Activated CD8-positive, alpha-beta memory T cell treated with anti-CD3 and anti-CD28 coated beads, Interleukin-2, amount 10 ng/mL, durations not matched to agents 7 days and 5 days (primary cell): ENCODE measurements at regions of chr5 and their contacts with region 1.

Region 1: GRCh38 chr5:134411546-134412266 is at the start of gene CDKN2AIPNL:
- DNase-seq: peak; percentile 92
- ATAC-seq: peak; percentile 100
- H3K4me3 Mint-ChIP-seq: peak within 1 kb of the TSS; percentile 96
- H3K27ac Mint-ChIP-seq: peak within 1 kb of the TSS; percentile 87
- H3K4me1 Mint-ChIP-seq: peaks cover 30% of the 10 kb centered on the region
- H3K27me3 Mint-ChIP-seq: no peaks in the 10 kb centered on the region
- total RNA-seq, gene CDKN2AIPNL: 28.0 to 33.8 TPM

Region 2: DNA sequence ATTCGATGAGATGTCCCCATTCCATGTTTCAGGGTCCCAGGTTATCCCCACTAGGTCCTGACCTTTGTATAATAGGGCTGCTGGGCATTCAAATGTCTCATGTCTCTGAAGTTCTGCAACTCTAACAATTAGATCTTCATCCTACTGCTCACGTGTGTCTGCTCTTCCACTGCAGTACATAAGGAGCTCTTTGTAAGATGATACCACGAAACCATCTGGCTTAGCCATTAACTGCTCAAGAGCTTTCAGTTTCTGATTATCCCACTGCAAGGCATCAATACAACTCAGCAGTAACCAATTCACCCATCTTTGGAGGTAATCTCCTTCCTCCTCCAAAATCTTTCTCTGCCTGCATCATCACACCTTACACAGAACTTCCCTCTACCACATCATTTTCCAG is 135.9 kb before region 1 on chr5:
- CTCF ChIA-PET with region 1: no interaction called
- DNase-seq: no peak
- ATAC-seq: peak; percentile 45
- H3K4me3 Mint-ChIP-seq: no peak overlapping the region
- H3K27ac Mint-ChIP-seq: no peak overlapping the region
- H3K4me1 Mint-ChIP-seq: peaks cover 5% of the 10 kb centered on the region
- H3K27me3 Mint-ChIP-seq: peaks cover 5% of the 10 kb centered on the region

Region 3: DNA sequence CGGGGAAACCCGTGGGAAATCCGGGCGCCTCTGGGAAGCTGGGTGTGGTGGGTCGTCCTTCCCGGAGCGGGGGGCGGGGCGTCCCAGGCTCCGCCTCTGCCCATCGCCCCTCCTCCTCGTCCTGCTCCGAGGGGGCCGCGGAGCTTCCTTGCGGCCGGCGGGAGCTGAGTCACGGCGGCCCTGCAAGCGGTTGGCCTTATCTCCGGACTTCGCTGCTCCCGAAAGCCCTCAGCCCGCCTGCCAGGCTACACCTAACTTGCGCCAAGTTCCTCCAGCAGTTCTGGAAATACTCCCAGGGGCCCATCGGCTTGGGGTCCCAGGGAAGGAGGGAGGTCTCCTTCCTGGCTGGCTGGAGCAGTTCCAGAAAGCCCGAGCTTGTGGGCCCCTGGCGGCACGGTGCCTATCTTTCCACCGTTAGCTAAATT is 54.1 kb after region 1 on chr5:
- CTCF ChIA-PET with region 1: interaction called, 22 read pairs
- DNase-seq: peak; percentile 72
- ATAC-seq: peak; percentile 93
- H3K4me3 Mint-ChIP-seq: peak overlapping the region; percentile 72
- H3K27ac Mint-ChIP-seq: peak overlapping the region; percentile 83
- H3K4me1 Mint-ChIP-seq: peaks cover 14% of the 10 kb centered on the region
- H3K27me3 Mint-ChIP-seq: no peaks in the 10 kb centered on the region

Region 4: GRCh38 chr5:134555890-134556311 is 144.2 kb after region 1 on chr5:
- CTCF ChIA-PET with region 1: no interaction called
- DNase-seq: peak; percentile 87
- ATAC-seq: peak; percentile 90
- H3K4me3 Mint-ChIP-seq: peak overlapping the region; percentile 12
- H3K27ac Mint-ChIP-seq: peak overlapping the region; percentile 91
- H3K4me1 Mint-ChIP-seq: peaks cover 29% of the 10 kb centered on the region
- H3K27me3 Mint-ChIP-seq: no peaks in the 10 kb centered on the region

Region 5: GRCh38 chr5:134724872-134725271 is 313.2 kb after region 1 on chr5:
- CTCF ChIA-PET with region 1: no interaction called
- DNase-seq: no peak
- ATAC-seq: no peak
- H3K4me3 Mint-ChIP-seq: no peak overlapping the region
- H3K27ac Mint-ChIP-seq: no peak overlapping the region
- H3K4me1 Mint-ChIP-seq: no peaks in the 10 kb centered on the region
- H3K27me3 Mint-ChIP-seq: no peaks in the 10 kb centered on the region